Breast epithelium (tissue), 4 donors: ENCODE measurements at regions of chr16 and their contacts with region 1.

Region 1: GRCh38 chr16:7218936-7219335 is 113.7 kb upstream of the RBFOX1 start:
- DNase-seq: no peak
- H3K4me3 ChIP-seq: no peak overlapping the region
- H3K27ac ChIP-seq: no peak overlapping the region
- H3K4me1 ChIP-seq: no peaks in the 10 kb centered on the region
- H3K27me3 ChIP-seq: no peaks in the 10 kb centered on the region
- CTCF ChIP-seq: no peak
- POLR2A ChIP-seq: no peak

Region 2: GRCh38 chr16:7200320-7200719 is 18.6 kb before region 1 on chr16:
- intact Hi-C with region 1: loop called (anchors 1 kb)
- DNase-seq: no peak
- H3K4me3 ChIP-seq: no peak overlapping the region
- H3K27ac ChIP-seq: no peak overlapping the region
- H3K4me1 ChIP-seq: no peaks in the 10 kb centered on the region
- H3K27me3 ChIP-seq: no peaks in the 10 kb centered on the region
- CTCF ChIP-seq: no peak
- POLR2A ChIP-seq: no peak